ENCODE measurements at regions of chr5 and their contacts with region 1.

Region 1: GRCh38 chr5:60960591-60960990 is 15.6 kb downstream of the NDUFAF2 start:
- DNase-seq: peak; percentile 40
- H3K4me3 ChIP-seq: no peak overlapping the region
- H3K27ac ChIP-seq: no peak overlapping the region
- H3K4me1 ChIP-seq: no peaks in the 10 kb centered on the region
- H3K27me3 ChIP-seq: no peaks in the 10 kb centered on the region
- CTCF ChIP-seq: peak; percentile 23 to 45
- POLR2A ChIP-seq: no peak

Region 2: DNA sequence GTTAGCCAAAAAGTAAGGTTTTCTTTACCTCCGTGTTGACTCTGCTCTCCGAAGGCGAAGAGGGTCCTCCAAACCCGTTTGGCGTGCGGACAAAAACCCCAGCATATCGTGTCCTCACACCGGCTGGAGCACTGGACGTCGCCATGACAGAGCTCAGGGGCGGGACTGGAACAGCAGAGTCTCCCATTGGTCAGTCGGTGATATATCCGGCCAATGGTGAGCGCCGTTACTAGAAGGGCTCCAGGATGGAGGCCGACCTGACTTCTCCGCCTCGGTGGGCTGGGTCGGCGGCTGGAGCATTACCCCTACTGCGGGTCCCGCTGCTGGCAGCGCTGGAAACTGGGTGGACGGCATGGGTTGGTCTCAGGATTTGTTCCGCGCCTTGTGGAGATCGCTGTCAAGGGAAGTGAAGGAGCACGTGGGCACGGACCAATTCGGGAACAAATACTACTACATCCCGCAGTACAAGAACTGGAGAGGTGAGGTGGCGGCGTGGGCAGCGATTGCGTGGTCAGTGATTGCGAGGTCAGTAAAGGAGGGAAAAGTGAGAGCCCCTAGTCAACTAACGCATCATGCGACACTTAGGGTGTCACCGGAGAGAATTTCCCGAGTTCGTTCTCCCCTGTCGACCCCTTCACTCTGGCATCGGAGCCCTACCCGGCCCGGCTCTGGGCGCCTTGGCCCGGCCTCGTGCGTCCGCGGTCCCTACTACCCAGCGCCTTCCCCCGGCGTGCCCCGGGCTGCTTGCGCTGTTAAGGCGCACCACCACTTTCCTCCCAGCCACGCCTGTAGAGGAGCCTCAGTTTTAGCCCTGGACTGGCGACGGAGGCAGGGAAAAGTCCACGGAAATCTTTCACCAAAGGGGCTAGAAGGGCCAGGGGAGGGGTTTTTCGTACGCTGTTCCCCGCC is 15.4 kb before region 1 on chr5 and contains the starts of genes ERCC8 and NDUFAF2:
- CTCF ChIA-PET with region 1: interaction called, 27 read pairs
- POLR2A ChIA-PET with region 1: no interaction called
- dilution Hi-C with region 1: no loop called
- intact Hi-C with region 1: no loop called
- DNase-seq: peak; percentile 95
- H3K4me3 ChIP-seq: peak within 1 kb of the TSS; percentile 71 to 94 (median 78)
- H3K27ac ChIP-seq: peak within 1 kb of the TSS; percentile 21
- H3K4me1 ChIP-seq: peaks cover 21% of the 10 kb centered on the region
- H3K27me3 ChIP-seq: no peaks in the 10 kb centered on the region
- CTCF ChIP-seq: no peak
- POLR2A ChIP-seq: peak; percentile 63
- total RNA-seq, gene ERCC8: 10.4 and 12.8 TPM in 2 replicates
- total RNA-seq, gene NDUFAF2: 39.9 and 42.4 TPM in 2 replicates

Region 3: GRCh38 chr5:61010467-61011454 is 50.2 kb after region 1 on chr5:
- CTCF ChIA-PET with region 1: interaction called, 10 read pairs
- POLR2A ChIA-PET with region 1: no interaction called
- dilution Hi-C with region 1: no loop called
- intact Hi-C with region 1: no loop called
- DNase-seq: no peak
- H3K4me3 ChIP-seq: no peak overlapping the region
- H3K27ac ChIP-seq: no peak overlapping the region
- H3K4me1 ChIP-seq: no peaks in the 10 kb centered on the region
- H3K27me3 ChIP-seq: no peaks in the 10 kb centered on the region
- CTCF ChIP-seq: peak; percentile 8 to 14
- POLR2A ChIP-seq: no peak

Region 4: GRCh38 chr5:61132559-61132958 is 172.0 kb after region 1 on chr5:
- CTCF ChIA-PET with region 1: no interaction called
- POLR2A ChIA-PET with region 1: no interaction called
- dilution Hi-C with region 1: no loop called
- intact Hi-C with region 1: no loop called
- DNase-seq: no peak
- H3K4me3 ChIP-seq: no peak overlapping the region
- H3K27ac ChIP-seq: no peak overlapping the region
- H3K4me1 ChIP-seq: no peaks in the 10 kb centered on the region
- H3K27me3 ChIP-seq: no peaks in the 10 kb centered on the region
- CTCF ChIP-seq: no peak
- POLR2A ChIP-seq: no peak

Region 5: DNA sequence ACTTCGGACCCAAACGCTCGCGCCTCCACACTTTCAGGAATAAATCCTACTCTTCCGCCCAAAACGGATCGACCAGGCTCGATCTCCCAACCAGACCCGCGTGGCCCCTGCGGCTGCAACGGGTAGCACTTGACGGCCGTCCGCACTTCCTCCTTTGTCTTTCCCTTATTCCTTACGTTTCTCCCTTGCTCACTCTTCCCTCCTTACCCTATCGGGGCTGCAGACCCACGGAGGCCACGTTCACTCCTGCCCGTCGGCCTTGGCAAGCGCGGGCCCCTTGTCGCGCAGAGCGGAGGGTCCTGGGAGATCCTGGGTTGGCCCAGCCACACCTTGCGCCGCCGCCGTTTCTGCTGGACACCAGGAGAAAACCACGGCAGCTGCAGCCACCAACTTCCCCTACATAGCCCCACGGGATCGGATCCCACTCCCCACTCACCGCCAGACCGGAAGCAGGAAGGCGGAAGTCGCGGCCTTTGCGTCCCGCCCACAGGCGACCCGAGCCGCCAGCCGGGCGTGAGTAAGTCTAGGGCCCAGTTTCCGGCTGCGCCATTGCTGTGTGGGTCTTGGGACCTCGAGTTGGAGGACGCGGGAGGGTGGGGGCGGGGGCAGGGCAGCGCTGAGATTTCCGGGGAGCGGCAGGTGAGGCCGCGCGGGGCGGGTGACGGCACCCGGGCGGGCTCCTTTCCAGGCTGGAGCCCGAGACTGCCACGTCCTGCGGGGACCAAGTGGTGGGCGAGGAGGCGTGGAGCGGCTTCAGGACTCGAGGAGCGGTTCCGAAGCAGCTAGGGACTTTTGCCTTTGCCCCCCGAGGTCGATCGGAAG is 201.6 kb after region 1 on chr5 and contains the start of gene SMIM15:
- CTCF ChIA-PET with region 1: interaction called, 11 read pairs
- POLR2A ChIA-PET with region 1: no interaction called
- dilution Hi-C with region 1: no loop called
- intact Hi-C with region 1: loop called (anchors 2 kb)
- DNase-seq: peak; percentile 82
- H3K4me3 ChIP-seq: peak within 1 kb of the TSS; percentile 22 to 70 (median 67)
- H3K27ac ChIP-seq: peak within 1 kb of the TSS; percentile 72
- H3K4me1 ChIP-seq: peaks cover 15% of the 10 kb centered on the region
- H3K27me3 ChIP-seq: no peaks in the 10 kb centered on the region
- CTCF ChIP-seq: no peak
- POLR2A ChIP-seq: peak; percentile 61
- total RNA-seq, gene SMIM15: 48.8 and 54.5 TPM in 2 replicates

Region 6: GRCh38 chr5:61658592-61659008 is 698.0 kb after region 1 on chr5:
- CTCF ChIA-PET with region 1: interaction called, 43 read pairs
- POLR2A ChIA-PET with region 1: no interaction called
- dilution Hi-C with region 1: no loop called
- intact Hi-C with region 1: loop called (anchors 1 kb)
- DNase-seq: peak; percentile 74
- H3K4me3 ChIP-seq: no peak overlapping the region
- H3K27ac ChIP-seq: no peak overlapping the region
- H3K4me1 ChIP-seq: no peaks in the 10 kb centered on the region
- H3K27me3 ChIP-seq: peaks cover 5 to 11% of the 10 kb centered on the region in 2 experiments
- CTCF ChIP-seq: peak; percentile 90 to 93
- POLR2A ChIP-seq: no peak

Region 7: DNA sequence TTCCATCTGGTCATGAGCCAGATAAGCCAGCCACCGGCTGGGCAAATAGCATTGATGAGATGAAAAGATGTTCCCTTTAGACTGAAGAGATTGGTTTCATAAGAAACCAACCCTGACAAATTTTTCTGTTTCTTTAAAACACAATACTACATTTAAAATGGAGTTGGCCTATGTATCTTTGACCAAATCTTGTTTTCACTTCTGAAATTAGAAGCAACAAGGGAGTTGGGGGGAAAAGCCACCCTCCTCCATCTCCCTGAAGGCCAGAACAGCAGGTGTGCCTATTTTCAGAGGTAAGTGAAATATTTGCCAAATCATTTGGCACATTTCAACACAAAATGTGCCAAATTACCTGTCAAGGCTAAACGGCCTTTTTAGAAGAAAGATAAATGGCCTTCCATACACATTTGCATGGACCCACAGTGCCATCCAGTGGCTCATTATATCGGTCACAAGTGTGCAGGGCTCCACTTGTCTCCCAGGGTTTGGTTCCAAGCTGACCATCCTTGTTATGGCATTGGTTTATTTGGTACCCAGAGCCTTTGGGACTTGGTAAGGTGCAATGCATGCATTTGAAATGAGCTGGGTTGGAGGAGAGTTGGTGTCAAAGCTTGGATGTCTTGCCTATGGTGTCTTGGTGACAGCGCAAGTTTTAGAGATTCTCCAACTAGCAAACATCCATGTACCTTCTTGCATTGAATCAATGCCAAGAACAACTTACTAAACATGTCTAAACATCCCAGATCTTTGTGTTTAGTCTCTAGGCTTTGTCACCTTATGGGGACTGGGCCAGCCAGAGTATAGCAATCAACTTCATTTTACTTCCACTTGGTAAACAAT is 973.4 kb after region 1 on chr5:
- CTCF ChIA-PET with region 1: interaction called, 13 read pairs
- POLR2A ChIA-PET with region 1: no interaction called
- dilution Hi-C with region 1: no loop called
- intact Hi-C with region 1: loop called (anchors 1 kb)
- DNase-seq: peak; percentile 55
- H3K4me3 ChIP-seq: no peak overlapping the region
- H3K27ac ChIP-seq: no peak overlapping the region
- H3K4me1 ChIP-seq: no peaks in the 10 kb centered on the region
- H3K27me3 ChIP-seq: no peaks in the 10 kb centered on the region
- CTCF ChIP-seq: peak; percentile 29 to 52
- POLR2A ChIP-seq: no peak